RWPE1 (cell line): ENCODE measurements at regions of chr19 and their contacts with region 1.

Region 1: GRCh38 chr19:7562646-7563393 is 27.3 kb downstream of the PNPLA6 start:
- DNase-seq: no peak
- H3K27ac ChIP-seq: no peak overlapping the region
- CTCF ChIP-seq: no peak

Region 2: DNA sequence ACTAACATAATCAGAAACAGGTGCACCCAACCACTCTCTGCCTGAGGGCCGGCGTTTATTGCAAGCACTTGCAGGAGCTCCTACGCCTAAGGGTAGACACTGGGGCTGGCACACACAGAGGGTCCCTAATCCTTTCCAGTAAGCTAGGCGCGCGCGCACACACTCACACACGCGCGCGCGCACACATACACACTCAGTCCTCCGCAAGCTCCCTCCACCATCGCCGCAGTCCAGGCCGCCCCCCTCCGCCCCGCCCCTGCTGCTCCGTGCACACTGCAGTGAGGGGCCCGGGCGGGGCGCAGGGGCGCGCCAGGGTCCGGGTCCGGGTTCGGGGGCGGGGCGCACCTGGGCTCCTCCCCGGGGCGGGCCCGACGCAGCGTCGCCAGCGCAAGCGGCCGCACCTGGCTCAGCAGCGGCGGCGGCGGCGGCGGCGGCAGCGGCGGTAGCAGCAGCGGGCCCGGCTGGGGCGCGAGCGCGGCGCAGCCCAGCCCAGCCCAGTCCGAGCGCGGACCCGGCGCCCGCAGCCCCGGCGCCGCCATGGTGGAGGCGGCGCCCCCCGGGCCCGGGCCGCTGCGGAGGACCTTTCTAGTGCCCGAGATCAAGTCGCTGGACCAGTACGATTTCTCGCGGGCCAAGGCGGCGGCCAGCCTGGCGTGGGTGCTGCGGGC is 32.8 kb after region 1 on chr19 and contains the start of gene CAMSAP3:
- CTCF ChIA-PET with region 1: interaction called, 10 read pairs
- POLR2A ChIA-PET with region 1: no interaction called
- DNase-seq: no peak
- H3K27ac ChIP-seq: no peak within 1 kb of the TSS
- CTCF ChIP-seq: no peak

Region 3: DNA sequence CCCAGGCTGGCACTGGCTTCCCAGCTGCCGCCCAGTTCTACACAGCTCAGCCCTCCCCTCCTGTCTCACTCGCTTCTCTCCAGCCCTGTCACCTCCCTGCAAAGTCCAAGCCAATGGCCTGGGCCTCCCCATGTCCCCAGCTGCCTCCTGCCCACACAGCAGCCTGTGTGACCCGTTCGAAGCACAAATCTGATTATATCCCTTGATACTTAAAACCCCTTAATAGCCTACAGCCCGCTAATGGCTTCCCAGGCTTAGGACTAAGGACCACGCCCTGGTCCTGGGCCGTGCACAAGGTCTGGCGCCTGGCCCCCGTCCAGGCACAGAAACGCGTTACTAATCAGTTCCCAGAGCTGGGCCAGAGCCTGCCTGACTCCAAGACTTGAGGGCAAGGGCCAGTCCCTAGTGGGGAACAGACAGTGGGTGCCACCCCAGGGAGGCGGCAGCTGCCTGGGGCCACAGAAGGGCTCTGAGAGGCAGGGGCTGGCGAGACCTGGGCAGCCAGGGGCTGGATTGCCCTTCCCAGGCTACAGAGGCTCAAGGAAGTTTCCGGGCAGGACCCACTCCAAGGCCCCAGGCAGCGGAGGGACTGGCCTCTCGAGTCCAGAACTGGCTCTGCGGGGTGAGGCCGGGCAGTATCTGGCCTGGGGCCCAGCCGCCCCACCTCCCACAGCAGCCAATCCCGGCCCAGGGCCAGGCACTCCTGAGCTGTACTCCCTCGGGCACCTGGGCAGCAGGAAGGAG is 56.1 kb after region 1 on chr19:
- CTCF ChIA-PET with region 1: interaction called, 10 read pairs
- POLR2A ChIA-PET with region 1: no interaction called
- DNase-seq: no peak
- H3K27ac ChIP-seq: peak overlapping the region; percentile 41
- CTCF ChIP-seq: no peak

Region 4: GRCh38 chr19:7680606-7681339 is 118.0 kb after region 1 on chr19 and contains the start of gene TRAPPC5:
- CTCF ChIA-PET with region 1: interaction called, 13 read pairs
- POLR2A ChIA-PET with region 1: no interaction called
- DNase-seq: peak; percentile 80
- H3K27ac ChIP-seq: peak within 1 kb of the TSS; percentile 74
- CTCF ChIP-seq: peak; percentile 96

Region 5: GRCh38 chr19:7799640-7800355 is 237.0 kb after region 1 on chr19:
- CTCF ChIA-PET with region 1: interaction called, 19 read pairs
- POLR2A ChIA-PET with region 1: no interaction called
- DNase-seq: peak; percentile 72
- H3K27ac ChIP-seq: peak overlapping the region; percentile 44; the same call in 1 of the 2 replicates
- CTCF ChIP-seq: peak; percentile 68